CD4-positive, alpha-beta T cell (primary cell): ENCODE measurements at regions of chr6 and their contacts with region 1.

Region 1: DNA sequence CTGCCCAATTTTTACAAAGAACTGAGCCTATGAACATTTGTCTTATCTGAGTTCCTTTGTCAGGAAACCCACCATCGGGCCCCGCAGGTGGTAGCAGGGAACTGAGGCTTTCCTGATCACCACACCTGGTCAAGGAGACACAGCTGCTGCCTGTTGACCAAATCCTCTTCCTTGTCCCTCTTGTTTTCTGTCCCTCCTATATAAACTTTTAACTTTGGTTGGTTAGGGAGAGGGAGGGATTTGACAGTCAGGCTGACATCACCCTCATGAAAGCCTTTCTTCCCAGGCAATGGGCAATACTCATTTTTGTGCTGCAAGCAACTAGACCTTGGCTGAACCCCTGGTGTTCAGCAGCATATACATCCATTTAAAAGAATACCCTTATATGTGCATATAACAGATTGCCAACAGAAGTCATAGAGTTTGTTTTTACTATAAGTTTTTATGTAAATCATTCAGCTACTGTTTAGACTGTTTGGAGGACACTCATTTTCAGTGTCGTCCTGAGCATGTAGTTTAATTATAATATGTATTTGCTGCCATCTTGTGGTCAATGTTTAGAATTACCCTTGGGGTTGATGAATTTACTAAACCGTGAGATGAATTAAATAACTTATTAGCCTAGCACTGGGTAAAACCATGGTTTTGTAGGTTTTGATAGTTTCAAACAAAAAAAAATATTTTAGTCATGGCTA is 17.0 kb downstream of the CRISP1 start:
- DNase-seq: peak in 3 of 14 experiments; percentile 15 to 30 (median 29)
- ATAC-seq: no peak
- H3K4me3 ChIP-seq: no peak overlapping the region
- H3K4me3 Mint-ChIP-seq: no peak overlapping the region
- H3K27ac ChIP-seq: no peak overlapping the region
- H3K27ac Mint-ChIP-seq: no peak overlapping the region
- H3K4me1 ChIP-seq: no peaks in the 10 kb centered on the region
- H3K4me1 Mint-ChIP-seq: no peaks in the 10 kb centered on the region
- H3K27me3 ChIP-seq: no peaks in the 10 kb centered on the region
- H3K27me3 Mint-ChIP-seq: peaks cover 27% of the 10 kb centered on the region
- CTCF ChIP-seq: peak; percentile 64

Region 2: DNA sequence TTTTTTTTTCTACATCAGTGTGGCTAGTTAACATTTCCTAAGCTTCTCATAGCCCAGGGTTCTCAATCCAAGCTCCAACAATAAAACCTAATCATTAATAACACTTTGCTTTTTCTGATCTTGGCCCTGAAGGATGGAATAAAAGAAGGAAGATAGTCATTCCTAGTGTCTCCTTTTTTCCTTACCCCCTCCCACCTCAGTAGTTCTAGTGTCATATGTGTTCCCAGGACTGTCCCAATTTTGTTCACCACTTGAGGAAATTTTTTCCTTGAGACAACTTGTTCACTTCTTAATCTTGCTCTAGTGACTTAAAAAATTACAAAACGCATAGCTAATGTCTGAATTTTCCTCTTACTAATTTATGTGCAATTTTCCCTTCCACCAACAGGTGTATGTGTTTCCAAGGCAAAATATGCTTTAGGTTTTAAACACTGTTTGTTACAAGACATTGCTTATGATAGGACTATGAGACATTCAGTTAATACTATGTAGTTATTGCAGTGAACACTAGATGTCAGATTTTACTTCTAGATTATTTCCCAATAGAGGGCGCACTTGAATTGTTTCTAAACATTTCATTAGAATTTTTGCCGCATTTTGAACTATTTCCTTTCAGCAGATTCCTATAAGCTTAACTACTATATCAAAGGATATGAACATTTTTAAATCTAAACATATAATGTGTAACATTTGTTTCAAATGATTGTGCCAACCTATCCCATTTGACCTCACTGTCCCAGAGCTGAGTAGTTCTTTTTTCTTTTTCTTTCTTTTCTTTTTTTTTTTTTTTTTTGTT is 317.4 kb before region 1 on chr6:
- CTCF ChIA-PET with region 1: no interaction called
- POLR2A ChIA-PET with region 1: no interaction called
- intact Hi-C with region 1: loop called (anchors 2 kb)
- DNase-seq: peak in 3 of 14 experiments; percentile 41 to 44 (median 42)
- ATAC-seq: peak; percentile 77
- H3K4me3 ChIP-seq: no peak overlapping the region
- H3K4me3 Mint-ChIP-seq: no peak overlapping the region
- H3K27ac ChIP-seq: no peak overlapping the region
- H3K27ac Mint-ChIP-seq: no peak overlapping the region
- H3K4me1 ChIP-seq: no peaks in the 10 kb centered on the region
- H3K4me1 Mint-ChIP-seq: peaks cover 3% of the 10 kb centered on the region
- H3K27me3 ChIP-seq: no peaks in the 10 kb centered on the region
- H3K27me3 Mint-ChIP-seq: peaks cover 23% of the 10 kb centered on the region
- CTCF ChIP-seq: peak; percentile 89

Region 3: GRCh38 chr6:49676696-49677281 is 172.6 kb before region 1 on chr6:
- CTCF ChIA-PET with region 1: no interaction called
- POLR2A ChIA-PET with region 1: no interaction called
- intact Hi-C with region 1: no loop called
- DNase-seq: no peak
- ATAC-seq: no peak
- H3K4me3 ChIP-seq: no peak overlapping the region
- H3K4me3 Mint-ChIP-seq: no peak overlapping the region
- H3K27ac ChIP-seq: no peak overlapping the region
- H3K27ac Mint-ChIP-seq: no peak overlapping the region
- H3K4me1 ChIP-seq: no peaks in the 10 kb centered on the region
- H3K4me1 Mint-ChIP-seq: no peaks in the 10 kb centered on the region
- H3K27me3 ChIP-seq: no peaks in the 10 kb centered on the region
- H3K27me3 Mint-ChIP-seq: no peaks in the 10 kb centered on the region
- CTCF ChIP-seq: no peak

Region 4: DNA sequence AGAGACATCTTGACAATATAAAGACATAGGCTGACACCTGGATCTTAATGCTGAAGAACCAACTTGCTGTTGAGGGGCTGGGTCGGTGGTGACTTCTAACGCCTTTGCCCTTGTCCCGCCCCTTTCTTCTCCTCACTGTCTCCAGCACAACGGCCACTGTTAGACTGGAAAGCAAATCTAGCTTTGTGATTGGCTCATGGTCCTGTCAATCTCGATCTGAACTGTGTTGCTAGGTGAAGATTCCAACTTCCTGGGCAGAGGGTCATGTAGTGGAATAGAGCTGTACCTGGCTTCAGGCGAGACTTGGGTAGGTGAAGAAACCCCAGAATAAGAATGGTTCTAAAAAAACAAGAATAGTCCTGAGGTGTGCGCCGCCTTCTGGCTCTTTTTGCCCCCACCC is 62.2 kb before region 1 on chr6 and contains the start of gene PGK2:
- CTCF ChIA-PET with region 1: no interaction called
- POLR2A ChIA-PET with region 1: no interaction called
- intact Hi-C with region 1: loop called in 1 of 2 experiments (anchors 10 kb)
- DNase-seq: no peak
- ATAC-seq: no peak
- H3K4me3 ChIP-seq: no peak within 1 kb of the TSS
- H3K4me3 Mint-ChIP-seq: no peak within 1 kb of the TSS
- H3K27ac ChIP-seq: no peak within 1 kb of the TSS
- H3K27ac Mint-ChIP-seq: no peak within 1 kb of the TSS
- H3K4me1 ChIP-seq: no peaks in the 10 kb centered on the region
- H3K4me1 Mint-ChIP-seq: no peaks in the 10 kb centered on the region
- H3K27me3 ChIP-seq: no peaks in the 10 kb centered on the region
- H3K27me3 Mint-ChIP-seq: no peaks in the 10 kb centered on the region
- CTCF ChIP-seq: no peak
- total RNA-seq, gene PGK2: not detected

Region 5: GRCh38 chr6:49898904-49899566 is 49.7 kb after region 1 on chr6:
- CTCF ChIA-PET with region 1: no interaction called
- POLR2A ChIA-PET with region 1: no interaction called
- intact Hi-C with region 1: no loop called
- DNase-seq: no peak
- ATAC-seq: no peak
- H3K4me3 ChIP-seq: no peak overlapping the region
- H3K4me3 Mint-ChIP-seq: no peak overlapping the region
- H3K27ac ChIP-seq: no peak overlapping the region
- H3K27ac Mint-ChIP-seq: no peak overlapping the region
- H3K4me1 ChIP-seq: no peaks in the 10 kb centered on the region
- H3K4me1 Mint-ChIP-seq: no peaks in the 10 kb centered on the region
- H3K27me3 ChIP-seq: no peaks in the 10 kb centered on the region
- H3K27me3 Mint-ChIP-seq: no peaks in the 10 kb centered on the region
- CTCF ChIP-seq: no peak